HEK293 (cell line): ENCODE measurements at regions of chrX and their contacts with region 1.

Region 1: GRCh38 chrX:107537815-107538214 is 88.4 kb downstream of the FRMPD3 start:
- H3K4me3 ChIP-seq: no peak overlapping the region
- H3K27ac ChIP-seq: no peak overlapping the region
- H3K4me1 ChIP-seq: no peaks in the 10 kb centered on the region
- CTCF ChIP-seq: no peak

Region 2: DNA sequence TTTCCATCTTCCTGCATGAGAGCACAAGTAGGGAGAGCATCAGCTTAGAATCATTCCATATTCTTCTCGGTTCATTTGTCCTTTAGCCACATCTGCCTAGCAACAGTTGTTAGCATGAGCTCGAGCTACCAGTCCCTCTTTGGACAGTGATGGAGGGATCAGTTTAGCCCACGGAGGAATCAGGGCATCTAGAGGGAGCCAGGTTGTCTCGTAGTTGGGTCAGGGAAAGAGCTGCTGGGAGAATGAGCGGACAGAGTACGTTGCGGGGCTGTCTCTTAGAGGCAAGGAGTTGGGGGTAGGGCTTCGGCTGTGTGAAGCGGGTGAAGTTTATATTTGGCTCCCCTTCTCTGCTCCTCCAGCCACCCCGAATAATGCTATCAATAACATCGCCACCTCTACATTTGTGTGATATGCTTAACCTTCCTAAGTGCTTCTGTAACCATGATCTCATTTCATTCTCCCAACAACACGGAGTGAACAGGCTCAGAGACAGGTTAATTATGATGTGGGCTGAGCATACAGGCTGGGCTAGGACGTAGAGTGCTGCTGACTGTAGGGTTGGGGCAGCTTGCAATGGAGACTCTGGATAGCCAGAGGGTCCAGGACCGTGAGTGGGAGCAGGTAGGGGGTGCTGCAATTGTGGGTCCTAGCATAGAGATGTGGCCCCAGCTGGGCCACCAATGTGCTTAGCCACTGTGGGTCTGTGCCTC is 15.8 kb before region 1 on chrX:
- CTCF ChIA-PET with region 1: interaction called, 10 read pairs
- POLR2A ChIA-PET with region 1: no interaction called
- H3K4me3 ChIP-seq: no peak overlapping the region
- H3K27ac ChIP-seq: no peak overlapping the region
- H3K4me1 ChIP-seq: no peaks in the 10 kb centered on the region
- CTCF ChIP-seq: no peak

Region 3: GRCh38 chrX:107549504-107549903 is 11.7 kb after region 1 on chrX:
- CTCF ChIA-PET with region 1: interaction called, 12 read pairs
- POLR2A ChIA-PET with region 1: no interaction called
- H3K4me3 ChIP-seq: no peak overlapping the region
- H3K27ac ChIP-seq: no peak overlapping the region
- H3K4me1 ChIP-seq: no peaks in the 10 kb centered on the region
- CTCF ChIP-seq: no peak